ENCODE measurements at regions of chr9 and their contacts with region 1.

Region 1: DNA sequence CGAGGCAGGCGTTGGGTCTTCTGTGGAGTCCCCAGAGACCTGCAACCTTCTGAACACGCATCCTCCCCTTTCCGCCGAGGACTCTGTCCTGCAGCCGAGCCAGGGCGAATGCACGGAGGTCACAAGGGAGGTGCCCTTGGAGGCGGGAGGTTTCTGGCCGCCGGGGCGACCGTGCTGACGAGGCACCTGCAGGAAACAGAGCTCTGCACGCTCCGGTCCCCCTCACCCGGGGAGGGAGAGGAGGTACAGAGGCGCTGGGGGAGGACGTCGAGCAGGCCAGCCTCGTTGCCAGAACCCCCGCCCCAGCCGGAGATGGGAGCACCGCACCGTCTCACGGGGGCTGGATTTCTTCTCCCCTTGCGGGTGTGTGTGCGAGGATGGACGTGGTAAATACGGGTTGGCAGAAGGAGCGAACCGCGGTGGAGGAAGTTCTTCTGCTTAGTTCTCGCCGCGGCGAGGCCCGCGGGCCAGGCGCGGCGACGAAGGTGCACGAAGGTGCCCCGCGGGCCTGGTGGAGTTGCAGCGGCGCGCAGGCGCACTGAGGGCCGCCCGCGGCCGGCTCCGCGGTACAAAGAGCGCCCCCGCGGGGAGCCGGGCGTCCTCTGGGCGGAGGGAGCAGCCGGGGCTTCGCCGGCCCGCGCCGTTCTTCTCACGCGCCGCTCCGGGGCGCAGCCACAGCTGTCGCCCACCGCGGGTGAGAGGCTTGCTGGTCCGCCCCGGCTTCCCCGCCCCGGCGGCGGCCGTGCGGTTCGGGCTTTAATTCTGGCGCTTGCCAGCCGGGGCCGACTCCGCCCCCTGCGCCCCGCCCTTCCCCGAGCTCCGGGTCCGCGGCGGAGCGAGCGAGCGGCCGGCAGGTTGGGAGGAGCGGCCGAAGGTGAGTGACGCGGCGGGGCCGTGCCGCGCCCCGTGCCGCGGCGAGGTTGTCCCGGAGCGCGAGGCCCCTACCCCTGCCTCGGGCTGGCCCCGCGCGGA is 289.5 kb downstream of the DOCK8 start:
- DNase-seq: peak; percentile 58
- H3K4me3 ChIP-seq: peak within 1 kb of the TSS; percentile 22 to 33 (median 26)
- H3K27ac ChIP-seq: no peak within 1 kb of the TSS
- H3K4me1 ChIP-seq: peaks cover 4% of the 10 kb centered on the region
- H3K27me3 ChIP-seq: peaks cover 16 to 36% of the 10 kb centered on the region in 2 experiments
- CTCF ChIP-seq: peak; percentile 23 to 49
- POLR2A ChIP-seq: no peak

Region 2: GRCh38 chr9:469672-470551 is 34.3 kb before region 1 on chr9:
- CTCF ChIA-PET with region 1: no interaction called
- POLR2A ChIA-PET with region 1: no interaction called
- dilution Hi-C with region 1: no loop called
- intact Hi-C with region 1: loop called (anchors 1 kb)
- DNase-seq: peak; percentile 90
- H3K4me3 ChIP-seq: peak overlapping the region; percentile 46 to 82 (median 70)
- H3K27ac ChIP-seq: no peak overlapping the region
- H3K4me1 ChIP-seq: peaks cover 6% of the 10 kb centered on the region
- H3K27me3 ChIP-seq: no peaks in the 10 kb centered on the region
- CTCF ChIP-seq: no peak
- POLR2A ChIP-seq: peak; percentile 58

Region 3: GRCh38 chr9:763692-764524 is 259.7 kb after region 1 on chr9:
- CTCF ChIA-PET with region 1: no interaction called
- POLR2A ChIA-PET with region 1: no interaction called
- dilution Hi-C with region 1: no loop called
- intact Hi-C with region 1: loop called (anchors 1 kb)
- DNase-seq: peak; percentile 90
- H3K4me3 ChIP-seq: peak overlapping the region in 1 of 3 experiments; percentile 20
- H3K27ac ChIP-seq: no peak overlapping the region
- H3K4me1 ChIP-seq: peaks cover 2% of the 10 kb centered on the region
- H3K27me3 ChIP-seq: peaks cover 3% of the 10 kb centered on the region in 2 experiments
- CTCF ChIP-seq: peak; percentile 90 to 96
- POLR2A ChIP-seq: no peak